Activated CD8-positive, alpha-beta T cell treated with anti-CD3 and anti-CD28 coated beads, Interleukin-2, amount 10 ng/mL, durations not matched to agents 7 days and 5 days (primary cell): ENCODE measurements at regions of chr1 and their contacts with region 1.

Region 1: GRCh38 chr1:110780600-110781484 is 92.1 kb upstream of the CD53 start:
- DNase-seq: peak; percentile 86
- ATAC-seq: peak; percentile 71
- H3K4me3 Mint-ChIP-seq: no peak overlapping the region
- H3K27ac Mint-ChIP-seq: no peak overlapping the region
- H3K4me1 Mint-ChIP-seq: peaks cover 42% of the 10 kb centered on the region
- H3K27me3 Mint-ChIP-seq: peaks cover 7% of the 10 kb centered on the region

Region 2: GRCh38 chr1:110508038-110508940 is 272.6 kb before region 1 on chr1:
- CTCF ChIA-PET with region 1: no interaction called
- POLR2A ChIA-PET with region 1: no interaction called
- DNase-seq: no peak
- ATAC-seq: no peak
- H3K4me3 Mint-ChIP-seq: no peak overlapping the region
- H3K27ac Mint-ChIP-seq: no peak overlapping the region
- H3K4me1 Mint-ChIP-seq: no peaks in the 10 kb centered on the region
- H3K27me3 Mint-ChIP-seq: peaks cover 5% of the 10 kb centered on the region

Region 3: DNA sequence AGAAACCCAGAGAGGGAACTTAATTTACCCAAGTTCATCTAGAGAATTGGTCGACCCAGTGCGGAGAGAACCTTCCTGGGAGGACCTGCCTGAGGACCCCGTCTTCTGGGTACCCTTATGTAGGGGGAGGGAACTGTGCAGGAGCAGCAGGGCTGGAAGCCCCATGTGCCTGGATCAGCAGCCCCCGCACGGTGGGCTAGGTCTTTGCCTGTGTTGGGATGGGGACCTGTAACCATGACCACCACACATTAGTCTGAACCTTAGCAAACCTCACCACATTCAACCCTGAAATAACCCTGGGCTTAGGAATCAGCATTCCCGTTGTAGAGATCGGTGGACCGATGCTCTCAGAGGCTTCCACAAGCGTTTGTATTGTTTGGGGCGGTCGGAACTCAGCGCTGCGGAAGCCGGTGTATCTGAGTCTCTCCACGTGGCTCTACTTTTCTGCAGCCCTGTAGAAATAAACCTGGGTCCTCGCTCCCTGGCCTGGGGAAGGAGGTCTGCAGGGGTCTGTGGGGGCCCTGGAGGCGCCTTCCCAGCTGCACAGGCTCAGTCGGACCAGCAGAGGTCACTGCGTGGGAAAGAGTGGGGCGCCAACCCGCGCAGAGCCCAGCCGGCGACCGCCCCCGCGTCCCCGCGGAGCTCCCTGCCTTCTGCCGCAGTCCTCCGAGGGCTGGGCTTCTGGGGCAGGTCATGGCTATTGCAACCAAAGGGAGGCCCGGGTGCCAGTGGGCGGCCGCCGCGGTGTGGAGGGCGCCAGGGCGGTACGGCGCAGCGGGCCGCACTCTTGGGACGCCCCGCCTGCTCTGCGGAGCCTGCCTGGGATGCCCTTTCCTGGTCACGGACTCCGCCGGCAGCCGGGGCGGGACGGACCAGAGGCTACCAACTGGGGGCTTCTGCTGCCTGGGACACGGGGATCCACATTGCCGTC is 225.7 kb before region 1 on chr1:
- CTCF ChIA-PET with region 1: interaction called, 44 read pairs
- POLR2A ChIA-PET with region 1: no interaction called
- DNase-seq: peak; percentile 62
- ATAC-seq: peak; percentile 84
- H3K4me3 Mint-ChIP-seq: no peak overlapping the region
- H3K27ac Mint-ChIP-seq: no peak overlapping the region
- H3K4me1 Mint-ChIP-seq: peaks cover 2% of the 10 kb centered on the region
- H3K27me3 Mint-ChIP-seq: peaks cover 51% of the 10 kb centered on the region

Region 4: DNA sequence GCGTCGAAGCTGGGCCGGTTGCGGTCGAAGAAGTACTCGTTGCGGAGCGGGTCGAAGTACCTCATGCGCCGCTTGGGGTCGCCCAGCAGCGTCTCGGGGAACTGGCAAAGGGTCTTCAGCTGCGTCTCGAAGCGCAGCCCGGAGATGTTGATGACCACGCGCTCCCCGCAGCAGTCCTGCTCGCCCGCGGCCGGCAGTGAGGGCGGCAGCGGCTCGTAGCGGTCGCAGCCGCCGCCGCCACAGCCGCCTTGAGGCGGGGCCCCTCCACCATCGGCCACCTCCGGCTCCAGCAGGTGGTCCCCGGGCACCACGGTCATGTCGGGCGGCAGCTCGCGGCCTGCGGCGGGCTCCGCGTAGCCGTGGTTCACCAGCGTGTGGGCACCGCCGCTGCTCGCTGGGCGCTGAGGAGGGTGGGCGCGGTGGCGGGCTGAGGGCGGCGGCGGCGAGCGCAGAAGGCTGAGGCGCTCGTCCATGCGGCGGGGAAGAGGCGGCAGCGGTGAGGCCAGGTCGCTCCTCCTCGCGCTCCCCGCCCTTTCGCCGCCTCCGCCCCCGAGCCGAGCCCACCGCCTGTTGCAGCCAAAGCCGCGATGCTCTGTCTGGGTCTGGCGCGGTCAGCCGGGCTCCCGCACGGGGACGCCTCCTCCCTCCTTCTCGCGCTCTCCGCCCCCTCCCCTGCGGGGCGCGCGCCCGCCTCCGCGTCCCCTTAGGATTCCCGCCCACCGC is 106.3 kb before region 1 on chr1 and contains the start of gene KCNA3:
- CTCF ChIA-PET with region 1: interaction called, 15 read pairs
- POLR2A ChIA-PET with region 1: interaction called, 5 read pairs
- DNase-seq: peak; percentile 77
- ATAC-seq: peak; percentile 43
- H3K4me3 Mint-ChIP-seq: peak within 1 kb of the TSS; percentile 95
- H3K27ac Mint-ChIP-seq: peak within 1 kb of the TSS; percentile 91
- H3K4me1 Mint-ChIP-seq: peaks cover 33% of the 10 kb centered on the region
- H3K27me3 Mint-ChIP-seq: no peaks in the 10 kb centered on the region
- total RNA-seq, gene KCNA3: 49.0 to 49.3 TPM

Region 5: GRCh38 chr1:110798691-110799256 is 17.9 kb after region 1 on chr1:
- CTCF ChIA-PET with region 1: interaction called, 15 read pairs
- POLR2A ChIA-PET with region 1: no interaction called
- DNase-seq: no peak
- ATAC-seq: no peak
- H3K4me3 Mint-ChIP-seq: no peak overlapping the region
- H3K27ac Mint-ChIP-seq: no peak overlapping the region
- H3K4me1 Mint-ChIP-seq: peaks cover under 1% of the 10 kb centered on the region
- H3K27me3 Mint-ChIP-seq: peaks cover 2% of the 10 kb centered on the region

Region 6: GRCh38 chr1:110872745-110873720 is 92.2 kb after region 1 on chr1 and contains the start of gene CD53:
- CTCF ChIA-PET with region 1: interaction called, 10 read pairs
- POLR2A ChIA-PET with region 1: interaction called, 117 read pairs
- DNase-seq: peak; percentile 79
- ATAC-seq: peak; percentile 38
- H3K4me3 Mint-ChIP-seq: peak within 1 kb of the TSS; percentile 97
- H3K27ac Mint-ChIP-seq: peak within 1 kb of the TSS; percentile 98
- H3K4me1 Mint-ChIP-seq: peaks cover 37% of the 10 kb centered on the region
- H3K27me3 Mint-ChIP-seq: no peaks in the 10 kb centered on the region
- total RNA-seq, gene CD53: 392 to 404 TPM

Region 7: GRCh38 chr1:110927484-110928075 is 146.7 kb after region 1 on chr1:
- CTCF ChIA-PET with region 1: no interaction called
- POLR2A ChIA-PET with region 1: no interaction called
- DNase-seq: no peak
- ATAC-seq: no peak
- H3K4me3 Mint-ChIP-seq: no peak overlapping the region
- H3K27ac Mint-ChIP-seq: no peak overlapping the region
- H3K4me1 Mint-ChIP-seq: no peaks in the 10 kb centered on the region
- H3K27me3 Mint-ChIP-seq: peaks cover 2% of the 10 kb centered on the region

Region 8: GRCh38 chr1:110986407-110986891 is 205.6 kb after region 1 on chr1:
- CTCF ChIA-PET with region 1: interaction called, 37 read pairs
- POLR2A ChIA-PET with region 1: no interaction called
- DNase-seq: no peak
- ATAC-seq: no peak
- H3K4me3 Mint-ChIP-seq: no peak overlapping the region
- H3K27ac Mint-ChIP-seq: no peak overlapping the region
- H3K4me1 Mint-ChIP-seq: peaks cover 15% of the 10 kb centered on the region
- H3K27me3 Mint-ChIP-seq: peaks cover 9% of the 10 kb centered on the region